Naive thymus-derived CD4-positive, alpha-beta T cell (primary cell): ENCODE measurements at regions of chr12 and their contacts with region 1.

Region 1: DNA sequence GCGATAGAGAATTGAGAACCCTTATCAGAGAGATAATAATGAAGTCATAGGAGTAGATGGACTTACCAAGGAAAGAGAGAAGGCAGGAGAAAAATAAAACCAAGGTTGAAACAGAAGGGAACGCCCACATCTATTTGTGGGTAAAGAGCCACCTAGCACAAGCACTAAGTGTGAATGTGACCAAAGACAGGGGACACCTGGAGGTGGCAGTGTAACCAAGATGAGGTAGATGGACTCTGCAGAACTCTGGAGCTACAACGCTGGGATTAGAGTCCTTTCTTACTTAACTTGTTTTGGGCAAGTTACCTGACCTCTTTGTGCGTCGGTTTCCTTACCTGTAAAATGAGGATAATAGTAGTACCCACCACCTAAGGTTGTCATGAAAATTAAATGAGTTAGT is 101.9 kb downstream of the SLC5A8 start:
- DNase-seq: no peak
- ATAC-seq: no peak
- H3K4me3 ChIP-seq: no peak overlapping the region
- H3K4me3 Mint-ChIP-seq: no peak overlapping the region
- H3K27ac ChIP-seq: no peak overlapping the region
- H3K27ac Mint-ChIP-seq: no peak overlapping the region
- H3K4me1 ChIP-seq: no peaks in the 10 kb centered on the region
- H3K4me1 Mint-ChIP-seq: no peaks in the 10 kb centered on the region
- H3K27me3 ChIP-seq: no peaks in the 10 kb centered on the region
- H3K27me3 Mint-ChIP-seq: no peaks in the 10 kb centered on the region

Region 2: DNA sequence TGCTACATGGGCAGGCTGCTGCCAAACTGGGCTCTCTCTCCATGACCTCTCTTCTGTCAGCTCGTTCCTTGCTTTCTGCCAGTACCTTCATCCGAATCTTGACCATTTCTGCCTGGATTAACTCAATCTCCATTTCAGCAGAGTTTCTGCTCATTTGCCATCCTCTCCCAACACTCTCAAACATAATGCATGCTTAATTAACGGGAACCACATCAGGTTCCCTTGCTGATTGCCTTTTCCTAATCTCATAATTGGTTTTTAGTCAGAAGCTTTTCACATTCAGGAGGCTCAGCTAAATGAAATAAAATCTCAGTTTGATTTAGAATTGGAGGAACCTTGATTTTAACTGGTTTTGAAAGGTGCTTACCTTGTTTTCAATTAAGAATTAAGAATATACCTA is 25.4 kb before region 1 on chr12:
- CTCF ChIA-PET with region 1: no interaction called
- POLR2A ChIA-PET with region 1: no interaction called
- intact Hi-C with region 1: loop called in 1 of 2 experiments (anchors 1 kb)
- DNase-seq: no peak
- ATAC-seq: no peak
- H3K4me3 ChIP-seq: no peak overlapping the region
- H3K4me3 Mint-ChIP-seq: no peak overlapping the region
- H3K27ac ChIP-seq: no peak overlapping the region
- H3K27ac Mint-ChIP-seq: no peak overlapping the region
- H3K4me1 ChIP-seq: no peaks in the 10 kb centered on the region
- H3K4me1 Mint-ChIP-seq: peaks cover 0 to 23% (median 0%) of the 10 kb centered on the region in 7 donors
- H3K27me3 ChIP-seq: no peaks in the 10 kb centered on the region
- H3K27me3 Mint-ChIP-seq: peaks cover 4 to 13% (median 9%) of the 10 kb centered on the region in 5 donors